ENCODE measurements at regions of chr6 and their contacts with region 1.

Region 1: DNA sequence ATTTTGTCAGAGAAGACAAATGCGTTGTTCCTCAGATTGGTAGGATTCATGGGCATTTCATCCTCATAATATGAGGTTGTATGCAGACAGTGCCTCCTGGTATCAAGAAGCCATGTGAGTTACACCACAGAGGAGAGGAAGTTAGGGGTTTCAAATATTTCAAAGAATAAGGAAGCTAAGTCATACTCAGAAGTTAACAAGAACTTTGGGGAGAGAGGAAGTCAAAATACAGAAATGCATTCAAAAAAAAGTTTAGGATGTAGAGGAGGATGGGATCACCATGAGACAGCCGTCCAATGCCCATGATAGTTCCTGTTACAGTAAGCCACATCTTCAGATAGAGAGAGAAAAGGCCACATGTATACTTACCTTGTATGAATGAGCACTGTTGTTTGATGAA is 22.3 kb downstream of the HLA-DOB start:
- DNase-seq: no peak

Region 2: DNA sequence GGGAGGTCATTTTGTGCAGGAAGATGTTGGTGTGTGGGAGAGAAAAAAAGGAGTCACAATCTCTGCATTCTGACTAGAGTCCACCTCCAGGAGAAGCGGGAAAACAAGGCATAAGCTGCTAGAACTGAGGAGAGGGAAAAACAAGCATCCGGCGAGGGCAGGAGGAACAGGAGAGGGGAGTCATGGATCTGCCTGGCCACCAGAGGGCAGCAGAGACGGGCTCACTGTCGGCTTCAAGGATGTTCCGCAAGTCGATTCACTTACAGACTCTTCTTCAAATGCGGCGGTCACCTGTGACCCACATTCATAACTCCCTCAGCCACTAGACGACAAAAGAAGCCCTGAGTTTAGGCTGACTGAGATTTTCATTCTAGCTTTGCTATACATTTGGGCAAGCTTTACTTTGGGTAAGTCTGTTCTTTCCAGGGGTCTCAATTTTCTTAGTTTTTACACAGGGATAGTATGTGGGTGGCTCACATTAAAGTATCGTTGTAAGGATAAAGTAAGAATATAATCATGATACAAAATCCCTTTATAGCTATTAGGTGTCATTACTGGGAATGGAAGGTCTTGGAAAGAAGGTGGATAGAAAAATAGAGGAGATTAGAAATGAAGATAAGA is 381.0 kb before region 1 on chr6:
- intact Hi-C with region 1: loop called (anchors 5 kb)
- DNase-seq: peak; percentile 64 to 91 (median 82)